Lower leg skin (tissue), 4 donors: ENCODE measurements at regions of chr20 and their contacts with region 1.

Region 1: DNA sequence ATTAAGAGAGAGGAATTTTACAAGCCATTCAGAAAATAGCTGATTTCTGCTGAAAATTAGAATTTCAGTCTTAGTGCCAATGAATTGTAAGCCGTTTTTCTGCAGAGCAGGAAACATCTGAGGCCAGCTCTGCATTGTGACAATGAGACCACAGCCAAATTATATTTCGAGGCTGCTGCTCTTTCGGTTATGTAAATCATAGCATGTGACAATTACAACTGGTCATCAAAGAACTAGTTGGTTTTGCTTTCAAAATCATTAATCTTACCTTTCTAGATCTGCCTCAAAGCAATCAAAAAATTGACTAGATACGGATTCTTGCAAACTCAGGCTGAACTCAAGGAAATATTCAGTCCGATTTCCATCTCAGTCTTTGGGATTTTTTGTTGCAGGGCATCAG is 33.4 kb upstream of the INSM1 start:
- DNase-seq: no peak
- H3K4me3 ChIP-seq: no peak overlapping the region
- CTCF ChIP-seq: no peak
- POLR2A ChIP-seq: no peak

Region 2: GRCh38 chr20:20037960-20038359 is 296.5 kb before region 1 on chr20:
- intact Hi-C with region 1: no loop called
- DNase-seq: no peak
- H3K4me3 ChIP-seq: no peak overlapping the region
- CTCF ChIP-seq: no peak
- POLR2A ChIP-seq: no peak

Region 3: GRCh38 chr20:20295621-20296498 is 38.6 kb before region 1 on chr20:
- intact Hi-C with region 1: loop called (anchors 1 kb)
- DNase-seq: no peak
- H3K4me3 ChIP-seq: no peak overlapping the region
- CTCF ChIP-seq: no peak
- POLR2A ChIP-seq: no peak

Region 4: DNA sequence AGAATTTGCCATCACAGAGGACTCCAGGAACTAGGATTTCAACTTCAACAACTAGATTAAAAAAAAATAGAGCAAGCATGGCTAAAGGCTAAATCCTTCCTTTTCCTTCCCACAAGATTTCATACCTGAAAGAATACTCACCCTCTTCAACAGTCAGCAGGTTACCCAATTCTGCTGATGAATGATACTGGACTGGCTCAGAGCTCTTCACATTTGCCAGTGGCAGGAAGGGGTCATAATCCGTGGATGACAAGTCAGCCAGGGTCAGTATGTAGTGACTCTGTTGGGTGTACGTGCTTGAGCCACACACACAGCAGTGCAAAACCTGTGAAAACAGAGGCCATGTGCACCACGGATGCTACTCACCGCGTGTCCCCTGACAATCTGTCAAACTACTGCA is 186.3 kb after region 1 on chr20:
- intact Hi-C with region 1: no loop called
- DNase-seq: no peak
- H3K4me3 ChIP-seq: no peak overlapping the region
- CTCF ChIP-seq: no peak
- POLR2A ChIP-seq: no peak